Prostate gland (tissue), 2 donors: ENCODE measurements at regions of chr12 and their contacts with region 1.

Region 1: GRCh38 chr12:89542912-89543592 is 17.2 kb upstream of the POC1B start:
- DNase-seq: peak; percentile 61
- H3K4me3 ChIP-seq: no peak overlapping the region
- H3K27ac ChIP-seq: no peak overlapping the region
- H3K4me1 ChIP-seq: no peaks in the 10 kb centered on the region
- H3K27me3 ChIP-seq: no peaks in the 10 kb centered on the region
- CTCF ChIP-seq: peak; percentile 49 to 78 (median 76)
- POLR2A ChIP-seq: no peak

Region 2: DNA sequence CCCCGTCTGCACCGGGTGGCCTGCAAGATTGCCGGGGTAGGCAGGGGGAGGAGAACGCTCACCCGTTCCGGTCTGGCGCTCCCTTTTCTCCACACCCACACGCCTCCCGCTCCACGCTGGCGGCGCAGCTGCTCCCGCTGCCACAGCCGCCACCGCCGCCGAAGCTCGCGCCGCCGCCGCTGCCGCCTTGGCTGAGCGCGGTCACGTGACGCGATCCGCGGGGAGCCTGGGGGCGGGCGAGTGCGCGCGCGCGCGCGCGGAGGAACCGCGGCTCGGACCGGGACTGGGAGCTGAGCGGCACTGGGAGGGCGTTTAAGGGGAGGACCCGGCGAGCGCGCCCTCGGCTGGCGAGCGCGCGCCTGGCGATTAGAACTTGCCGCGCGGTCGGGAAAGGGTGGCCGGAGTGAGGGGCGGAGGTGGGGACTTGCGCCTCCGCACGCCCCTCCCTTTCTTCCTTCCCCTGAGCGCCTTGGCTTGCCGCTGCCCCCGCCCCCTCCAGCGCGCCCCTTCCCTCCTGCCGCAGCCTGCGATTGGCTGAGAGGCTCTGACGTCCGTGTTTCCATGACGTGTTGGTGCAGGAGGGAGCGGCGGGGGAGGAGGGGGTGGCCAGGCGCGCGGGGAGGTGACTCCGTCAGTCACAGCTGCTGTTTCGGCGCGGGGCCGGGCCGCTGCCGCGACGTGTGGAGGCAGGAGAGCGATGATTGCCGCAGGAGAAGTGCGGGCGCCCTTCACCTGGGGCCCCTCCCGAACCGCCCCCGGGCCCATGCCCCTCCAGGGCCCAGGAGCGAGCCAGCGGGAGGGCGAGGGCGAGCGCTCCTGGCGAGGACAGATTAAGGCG is 166.3 kb after region 1 on chr12:
- intact Hi-C with region 1: loop called (anchors 5 kb)
- DNase-seq: peak; percentile 98
- H3K4me3 ChIP-seq: peak overlapping the region; percentile 64 to 96
- H3K27ac ChIP-seq: peak overlapping the region; percentile 95 to 98
- H3K4me1 ChIP-seq: no peaks in the 10 kb centered on the region
- H3K27me3 ChIP-seq: no peaks in the 10 kb centered on the region
- CTCF ChIP-seq: peak in 1 of 4 experiments; percentile 10
- POLR2A ChIP-seq: peak; percentile 96

Region 3: DNA sequence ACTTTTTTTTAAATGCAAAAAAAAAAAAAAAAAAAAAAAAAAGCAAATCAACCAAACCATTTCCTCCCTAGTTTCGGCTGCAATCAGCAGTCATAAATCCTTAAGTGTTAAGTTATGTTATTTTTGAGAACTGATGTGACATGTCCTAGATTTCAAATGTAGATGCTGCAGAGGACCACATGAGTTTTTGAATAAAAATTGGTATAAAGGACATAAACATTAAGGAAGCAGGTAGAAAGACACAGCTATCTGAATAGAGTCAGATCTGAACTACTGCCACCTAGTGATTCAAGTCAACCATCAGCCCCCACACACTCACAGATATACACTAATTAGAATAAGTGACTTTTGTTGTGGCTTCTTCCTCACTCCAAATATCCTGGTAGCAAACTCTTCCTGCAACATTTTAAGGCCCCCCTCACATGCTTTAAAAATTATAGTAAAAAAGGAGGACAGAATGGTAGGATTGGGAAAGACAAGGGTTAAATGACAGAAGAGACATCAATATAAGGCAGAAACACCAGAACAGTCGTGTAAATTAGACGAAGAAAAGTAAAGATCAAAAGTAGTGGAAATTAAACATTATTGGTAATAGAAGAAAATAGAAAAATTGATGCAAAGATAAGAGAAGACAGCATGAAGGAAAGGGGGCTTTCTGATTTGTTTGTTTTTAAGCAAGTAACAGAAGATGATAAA is 560.1 kb after region 1 on chr12:
- intact Hi-C with region 1: loop called (anchors 10 kb)
- DNase-seq: no peak
- H3K4me3 ChIP-seq: no peak overlapping the region
- H3K27ac ChIP-seq: no peak overlapping the region
- H3K4me1 ChIP-seq: no peaks in the 10 kb centered on the region
- H3K27me3 ChIP-seq: no peaks in the 10 kb centered on the region
- CTCF ChIP-seq: peak in 1 of 4 experiments; percentile 40
- POLR2A ChIP-seq: no peak

Region 4: DNA sequence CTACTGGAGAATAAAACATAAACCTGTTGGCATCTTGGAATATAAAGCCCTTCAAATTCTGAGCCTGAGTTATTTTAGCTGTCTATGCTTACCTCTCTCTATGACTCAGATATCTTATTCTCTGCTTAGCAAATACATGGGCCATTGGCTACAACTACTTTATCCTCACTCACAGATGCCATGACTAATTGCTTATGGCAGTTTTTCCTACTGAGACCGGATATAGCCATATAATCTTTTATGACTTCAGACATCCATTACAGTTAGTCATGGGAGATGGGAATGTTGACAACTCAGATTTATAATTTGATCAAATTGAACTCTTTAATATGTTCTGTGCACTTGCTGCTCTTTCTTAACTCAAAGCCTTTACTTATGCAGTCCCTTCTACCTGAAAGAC is 668.0 kb after region 1 on chr12:
- intact Hi-C with region 1: no loop called
- DNase-seq: no peak
- H3K4me3 ChIP-seq: no peak overlapping the region
- H3K27ac ChIP-seq: no peak overlapping the region
- H3K4me1 ChIP-seq: no peaks in the 10 kb centered on the region
- H3K27me3 ChIP-seq: no peaks in the 10 kb centered on the region
- CTCF ChIP-seq: no peak
- POLR2A ChIP-seq: no peak

Region 5: DNA sequence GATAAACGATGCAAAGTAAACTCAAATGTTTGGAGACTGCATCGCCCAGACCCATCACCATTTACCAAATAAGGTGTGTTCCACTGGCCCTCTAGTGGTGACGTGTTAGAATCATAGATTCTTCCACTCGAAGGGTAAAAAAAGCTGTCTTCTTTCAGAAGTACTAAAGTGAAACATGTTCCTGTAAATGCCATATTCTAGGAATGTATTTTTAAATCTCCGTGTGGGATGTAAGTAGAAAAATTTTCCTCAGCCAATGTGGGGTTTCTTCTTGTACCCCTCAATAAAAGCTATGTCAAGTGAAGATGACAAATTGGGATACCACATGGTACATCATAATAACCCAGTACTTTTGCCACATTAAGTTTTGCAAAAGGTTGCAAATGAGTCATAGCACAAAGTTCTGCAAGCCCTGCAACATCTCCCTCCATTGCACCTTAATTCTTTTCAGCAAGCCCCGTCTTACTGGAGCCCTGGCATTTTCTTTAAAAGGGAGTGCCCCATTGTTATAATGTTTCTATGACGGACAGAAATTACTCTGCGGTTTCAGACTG is 1311.2 kb after region 1 on chr12:
- intact Hi-C with region 1: loop called (anchors 10 kb)
- DNase-seq: peak; percentile 19
- H3K4me3 ChIP-seq: no peak overlapping the region
- H3K27ac ChIP-seq: no peak overlapping the region
- H3K4me1 ChIP-seq: no peaks in the 10 kb centered on the region
- H3K27me3 ChIP-seq: no peaks in the 10 kb centered on the region
- CTCF ChIP-seq: peak; percentile 40 to 65 (median 62)
- POLR2A ChIP-seq: no peak

Region 6: DNA sequence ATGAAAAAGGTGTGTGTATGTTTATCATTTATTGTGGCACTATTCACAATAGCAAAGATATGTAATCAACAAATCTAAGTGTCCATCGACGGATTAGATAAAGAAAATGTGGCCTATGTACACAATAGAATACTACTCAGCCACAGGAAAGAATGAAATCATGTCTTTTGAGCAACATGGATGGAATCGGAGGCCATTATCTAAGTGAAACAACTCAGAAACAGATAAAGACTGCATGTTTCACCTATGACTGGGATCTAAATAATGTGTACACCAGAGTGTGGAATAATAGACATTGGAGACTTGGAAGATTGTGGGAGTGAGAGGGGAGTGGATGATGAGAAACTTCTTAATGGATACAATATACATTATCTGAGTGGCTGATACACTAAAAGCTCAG is 1367.9 kb after region 1 on chr12:
- intact Hi-C with region 1: loop called (anchors 10 kb)
- DNase-seq: no peak
- H3K4me3 ChIP-seq: no peak overlapping the region
- H3K27ac ChIP-seq: no peak overlapping the region
- H3K4me1 ChIP-seq: no peaks in the 10 kb centered on the region
- H3K27me3 ChIP-seq: no peaks in the 10 kb centered on the region
- CTCF ChIP-seq: no peak
- POLR2A ChIP-seq: no peak